MCF 10A (cell line): ENCODE measurements at regions of chr4 and their contacts with region 1.

Region 1: GRCh38 chr4:145618932-145619638 is at the start of gene MMAA:
- DNase-seq: peak; percentile 90
- H3K4me3 Mint-ChIP-seq: peak within 1 kb of the TSS; percentile 95
- H3K27ac Mint-ChIP-seq: peak within 1 kb of the TSS; percentile 99
- H3K4me1 Mint-ChIP-seq: peaks cover 9% of the 10 kb centered on the region
- H3K27me3 Mint-ChIP-seq: no peaks in the 10 kb centered on the region
- CTCF ChIP-seq: peak; percentile 65
- total RNA-seq, gene MMAA: 9.5 and 9.7 TPM in 2 replicates

Region 2: GRCh38 chr4:145001635-145002034 is 617.5 kb before region 1 on chr4:
- CTCF ChIA-PET with region 1: no interaction called
- POLR2A ChIA-PET with region 1: no interaction called
- intact Hi-C with region 1: no loop called
- DNase-seq: no peak
- H3K4me3 Mint-ChIP-seq: no peak overlapping the region
- H3K27ac Mint-ChIP-seq: no peak overlapping the region
- H3K4me1 Mint-ChIP-seq: no peaks in the 10 kb centered on the region
- H3K27me3 Mint-ChIP-seq: no peaks in the 10 kb centered on the region
- CTCF ChIP-seq: no peak

Region 3: GRCh38 chr4:145216535-145216934 is 402.6 kb before region 1 on chr4:
- CTCF ChIA-PET with region 1: interaction called, 78 read pairs
- POLR2A ChIA-PET with region 1: interaction called, 10 read pairs
- intact Hi-C with region 1: no loop called
- DNase-seq: peak; percentile 48
- H3K4me3 Mint-ChIP-seq: no peak overlapping the region
- H3K27ac Mint-ChIP-seq: no peak overlapping the region
- H3K4me1 Mint-ChIP-seq: no peaks in the 10 kb centered on the region
- H3K27me3 Mint-ChIP-seq: no peaks in the 10 kb centered on the region
- CTCF ChIP-seq: peak; percentile 61

Region 4: DNA sequence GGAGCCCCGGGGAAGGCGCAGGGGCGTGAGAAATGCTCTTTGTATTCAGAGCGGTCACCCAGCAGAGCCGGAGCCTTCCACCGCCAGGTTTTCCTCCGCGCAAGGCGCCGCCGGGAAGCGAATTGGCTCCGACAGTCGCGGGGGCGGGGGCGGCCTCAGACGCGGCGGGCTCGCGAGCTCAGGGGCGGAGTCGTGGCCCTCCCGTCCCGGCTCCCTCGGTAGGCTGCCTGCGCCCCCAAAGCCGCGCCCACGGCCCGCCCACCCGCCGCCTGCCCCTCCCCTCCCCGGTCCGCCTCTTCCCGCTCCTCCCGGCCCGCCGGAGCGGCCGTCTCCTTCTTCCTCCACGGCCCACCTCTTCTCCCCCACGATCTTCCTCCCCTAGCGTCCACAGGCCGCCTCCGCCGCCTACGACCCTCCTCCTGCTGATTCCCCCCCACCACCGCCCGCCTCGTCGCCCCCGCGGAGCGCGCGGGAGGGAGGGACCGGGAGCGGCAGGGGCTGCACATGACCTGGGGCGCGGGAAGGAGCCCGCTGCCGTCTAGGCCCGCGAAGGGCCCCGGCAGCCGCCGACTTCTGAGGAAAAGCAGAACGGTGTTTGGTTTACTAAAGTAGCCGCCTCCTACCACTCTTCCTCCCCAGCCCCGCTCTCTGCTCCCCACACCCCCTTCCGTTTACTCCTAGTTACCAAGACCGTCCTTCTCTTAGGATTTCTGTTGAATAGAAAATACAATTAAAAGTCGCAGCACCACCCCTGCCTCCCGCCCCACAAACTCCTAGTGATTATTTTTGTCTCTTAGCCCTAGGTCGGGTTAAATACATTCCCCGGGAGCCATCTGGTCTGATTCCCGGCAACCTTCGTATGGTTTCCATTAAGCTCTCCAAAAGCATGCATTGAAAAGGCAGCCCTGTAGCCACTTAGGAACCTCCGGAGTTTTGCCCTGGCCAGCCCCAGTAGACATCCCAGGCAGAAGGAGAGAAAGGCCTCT is 114.1 kb after region 1 on chr4:
- CTCF ChIA-PET with region 1: interaction called, 4 read pairs
- POLR2A ChIA-PET with region 1: interaction called, 39 read pairs
- intact Hi-C with region 1: loop called (anchors 1 kb)
- DNase-seq: peak; percentile 91
- H3K4me3 Mint-ChIP-seq: peak overlapping the region; percentile 69
- H3K27ac Mint-ChIP-seq: peak overlapping the region; percentile 98
- H3K4me1 Mint-ChIP-seq: peaks cover 41% of the 10 kb centered on the region
- H3K27me3 Mint-ChIP-seq: no peaks in the 10 kb centered on the region
- CTCF ChIP-seq: no peak

Region 5: GRCh38 chr4:145936142-145936996 is 317.3 kb after region 1 on chr4:
- CTCF ChIA-PET with region 1: interaction called, 4 read pairs
- POLR2A ChIA-PET with region 1: interaction called, 9 read pairs
- intact Hi-C with region 1: loop called (anchors 1 kb)
- DNase-seq: peak; percentile 70
- H3K4me3 Mint-ChIP-seq: peak overlapping the region; percentile 88
- H3K27ac Mint-ChIP-seq: peak overlapping the region; percentile 42
- H3K4me1 Mint-ChIP-seq: peaks cover 38% of the 10 kb centered on the region
- H3K27me3 Mint-ChIP-seq: no peaks in the 10 kb centered on the region
- CTCF ChIP-seq: peak; percentile 8

Region 6: DNA sequence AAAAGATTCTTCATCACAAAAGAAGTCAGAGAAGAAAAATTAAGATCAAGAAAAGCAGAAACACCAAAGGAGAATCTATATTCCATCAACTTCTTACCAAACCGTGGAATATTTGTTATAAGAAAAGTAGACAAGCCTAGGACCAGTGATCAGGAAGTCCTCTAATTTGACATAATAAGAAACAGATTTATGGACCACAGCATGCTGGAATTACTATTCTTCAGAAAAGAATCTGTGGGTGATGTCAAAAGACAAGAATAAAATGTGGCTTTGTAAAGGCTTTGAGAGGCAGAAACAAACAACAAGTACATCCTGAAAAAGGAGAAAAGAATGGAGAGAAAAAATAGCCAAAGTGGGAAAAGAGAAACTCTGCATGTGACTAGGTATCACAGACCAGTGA is 779.3 kb after region 1 on chr4:
- CTCF ChIA-PET with region 1: no interaction called
- POLR2A ChIA-PET with region 1: no interaction called
- intact Hi-C with region 1: no loop called
- DNase-seq: no peak
- H3K4me3 Mint-ChIP-seq: no peak overlapping the region
- H3K27ac Mint-ChIP-seq: no peak overlapping the region
- H3K4me1 Mint-ChIP-seq: no peaks in the 10 kb centered on the region
- H3K27me3 Mint-ChIP-seq: no peaks in the 10 kb centered on the region
- CTCF ChIP-seq: no peak

Region 7: GRCh38 chr4:146916479-146917076 is 1297.5 kb after region 1 on chr4:
- CTCF ChIA-PET with region 1: no interaction called
- POLR2A ChIA-PET with region 1: interaction called, 3 read pairs
- intact Hi-C with region 1: loop called (anchors 10 kb)
- DNase-seq: peak; percentile 59
- H3K4me3 Mint-ChIP-seq: no peak overlapping the region
- H3K27ac Mint-ChIP-seq: no peak overlapping the region
- H3K4me1 Mint-ChIP-seq: peaks cover 6% of the 10 kb centered on the region
- H3K27me3 Mint-ChIP-seq: peaks cover 58% of the 10 kb centered on the region
- CTCF ChIP-seq: peak; percentile 89